Ovary (tissue), 10 donors: ENCODE measurements at regions of chr11 and their contacts with region 1.

Region 1: GRCh38 chr11:12274558-12275197 is 102.7 kb upstream of the PARVA start:
- DNase-seq: peak in 1 of 5 donors; percentile 9
- H3K4me3 ChIP-seq: no peak overlapping the region
- H3K27ac ChIP-seq: no peak overlapping the region
- H3K4me1 ChIP-seq: no peaks in the 10 kb centered on the region
- H3K27me3 ChIP-seq: no peaks in the 10 kb centered on the region
- CTCF ChIP-seq: no peak
- EP300 ChIP-seq: no peak
- POLR2A ChIP-seq: no peak

Region 2: GRCh38 chr11:11806586-11806985 is 468.1 kb before region 1 on chr11:
- intact Hi-C with region 1: loop called in 1 of 4 experiments (anchors 10 kb)
- DNase-seq: no peak
- H3K4me3 ChIP-seq: no peak overlapping the region
- H3K27ac ChIP-seq: no peak overlapping the region
- H3K4me1 ChIP-seq: no peaks in the 10 kb centered on the region
- H3K27me3 ChIP-seq: no peaks in the 10 kb centered on the region
- CTCF ChIP-seq: no peak
- EP300 ChIP-seq: no peak
- POLR2A ChIP-seq: no peak

Region 3: GRCh38 chr11:11946180-11946579 is 328.5 kb before region 1 on chr11:
- intact Hi-C with region 1: loop called in 2 of 4 experiments (anchors 10 kb)
- DNase-seq: no peak
- H3K4me3 ChIP-seq: no peak overlapping the region
- H3K27ac ChIP-seq: no peak overlapping the region
- H3K4me1 ChIP-seq: no peaks in the 10 kb centered on the region
- H3K27me3 ChIP-seq: no peaks in the 10 kb centered on the region
- CTCF ChIP-seq: no peak
- EP300 ChIP-seq: no peak
- POLR2A ChIP-seq: no peak